Ascending aorta (tissue), 2 donors: ENCODE measurements at regions of chr10 and their contacts with region 1.

Region 1: GRCh38 chr10:6401562-6402348 is 178.3 kb downstream of the PRKCQ start:
- DNase-seq: peak; percentile 32 to 88
- H3K4me3 ChIP-seq: peak overlapping the region; percentile 35 to 55
- H3K27ac ChIP-seq: peak overlapping the region; percentile 48 to 71
- H3K4me1 ChIP-seq: peaks cover 0 to 13% of the 10 kb centered on the region in 2 donors
- H3K27me3 ChIP-seq: no peaks in the 10 kb centered on the region
- CTCF ChIP-seq: peak; percentile 68 to 82 (median 77)

Region 2: DNA sequence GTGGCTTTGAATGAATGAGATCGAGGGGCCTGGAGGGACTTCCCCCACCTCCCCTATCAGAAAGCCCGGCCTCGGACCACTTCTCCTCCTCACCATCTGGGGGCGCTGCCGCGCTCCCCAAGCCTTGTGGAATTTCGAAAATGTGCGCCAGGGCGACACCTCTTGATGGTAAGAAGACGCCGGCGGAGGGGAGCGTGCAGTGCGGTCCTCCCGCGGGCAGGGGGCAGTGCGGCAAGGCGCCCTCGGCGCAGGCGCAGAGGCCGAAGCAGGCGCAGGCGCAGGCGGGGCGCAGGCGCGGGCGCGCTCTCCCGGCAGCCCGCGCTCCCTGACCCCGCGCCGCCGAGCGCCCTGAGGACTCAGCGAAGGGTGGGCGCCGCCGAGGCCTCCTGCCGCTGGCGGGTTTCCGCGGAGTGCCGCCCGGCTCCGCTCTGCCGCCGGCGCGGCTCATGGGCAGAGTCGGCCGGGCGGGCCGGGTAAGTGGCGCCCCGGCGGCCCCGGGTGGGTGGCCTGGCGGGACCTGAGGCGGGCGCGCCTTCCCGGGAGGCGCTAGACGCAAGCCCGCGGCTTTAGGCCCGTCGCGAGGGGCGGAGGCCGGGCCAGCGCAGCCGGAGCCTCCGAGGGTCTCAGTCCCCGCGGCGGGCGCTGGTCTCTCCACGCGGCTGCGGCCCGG is 312.9 kb before region 1 on chr10 and contains the start of gene RBM17:
- intact Hi-C with region 1: loop called (anchors 1 kb)
- DNase-seq: peak; percentile 86 to 99
- H3K4me3 ChIP-seq: peak within 1 kb of the TSS; percentile 71 to 96
- H3K27ac ChIP-seq: peak within 1 kb of the TSS; percentile 71 to 84
- H3K4me1 ChIP-seq: peaks cover 4 to 27% of the 10 kb centered on the region in 2 donors
- H3K27me3 ChIP-seq: no peaks in the 10 kb centered on the region
- CTCF ChIP-seq: peak; percentile 99 to 100 (median 100)
- total RNA-seq, gene RBM17: 22.7 TPM

Region 3: DNA sequence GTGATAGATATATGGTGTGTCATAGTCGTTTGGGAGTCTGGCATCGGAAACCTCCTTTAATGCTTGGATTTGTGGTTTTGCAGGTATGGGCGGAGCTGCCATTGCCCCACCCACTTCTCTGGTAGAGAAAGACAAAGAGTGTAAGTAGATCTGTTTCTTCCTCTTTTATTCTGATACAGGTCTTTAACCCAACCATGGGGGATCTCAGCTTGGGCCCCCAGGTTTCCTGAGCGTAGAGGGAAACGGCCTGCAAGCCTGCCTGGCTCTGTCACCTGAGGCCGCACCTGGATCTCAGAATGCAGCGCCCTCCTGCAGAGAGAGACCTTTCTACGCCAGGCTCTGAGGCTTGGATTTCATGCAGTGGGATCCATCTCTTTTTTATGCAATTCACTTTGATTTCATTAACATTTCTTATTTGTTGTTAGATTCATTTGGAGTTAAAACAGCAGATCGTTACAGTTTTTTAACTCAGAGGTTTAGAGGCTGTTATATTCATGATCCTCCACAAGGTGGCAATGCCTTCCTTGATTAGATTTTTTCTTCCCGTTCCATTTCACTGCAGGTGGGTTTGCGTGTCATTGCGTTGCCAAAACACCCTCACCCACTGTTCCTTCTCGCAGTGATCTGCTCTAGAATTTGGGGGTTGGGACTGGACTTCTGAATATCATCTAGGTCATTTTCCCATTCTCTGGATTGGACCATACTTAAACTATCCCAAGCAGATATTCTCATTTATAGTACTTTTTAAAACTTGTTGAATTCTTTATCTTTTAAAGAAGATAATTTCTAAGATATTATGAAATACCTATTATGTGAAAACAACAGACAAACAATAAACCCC is 292.9 kb before region 1 on chr10:
- intact Hi-C with region 1: loop called (anchors 1 kb)
- DNase-seq: no peak
- H3K4me3 ChIP-seq: no peak overlapping the region
- H3K27ac ChIP-seq: no peak overlapping the region
- H3K4me1 ChIP-seq: peaks cover 0 to 2% of the 10 kb centered on the region in 2 donors
- H3K27me3 ChIP-seq: no peaks in the 10 kb centered on the region
- CTCF ChIP-seq: peak; percentile 69 to 84 (median 82)

Region 4: GRCh38 chr10:6151087-6151977 is 250.4 kb before region 1 on chr10:
- intact Hi-C with region 1: loop called (anchors 5 kb)
- DNase-seq: peak in 1 of 2 donors; percentile 84
- H3K4me3 ChIP-seq: peak overlapping the region in 1 of 2 donors; percentile 43
- H3K27ac ChIP-seq: peak overlapping the region; percentile 59 to 72
- H3K4me1 ChIP-seq: peaks cover 0 to 8% of the 10 kb centered on the region in 2 donors
- H3K27me3 ChIP-seq: no peaks in the 10 kb centered on the region
- CTCF ChIP-seq: peak; percentile 61 to 73 (median 70)

Region 5: GRCh38 chr10:6221971-6222751 is 179.6 kb before region 1 on chr10:
- intact Hi-C with region 1: loop called (anchors 5 kb)
- DNase-seq: peak in 1 of 2 donors; percentile 90
- H3K4me3 ChIP-seq: peak overlapping the region in 1 of 2 donors; percentile 7
- H3K27ac ChIP-seq: peak overlapping the region; percentile 87 to 93
- H3K4me1 ChIP-seq: peaks cover 10 to 22% of the 10 kb centered on the region in 2 donors
- H3K27me3 ChIP-seq: no peaks in the 10 kb centered on the region
- CTCF ChIP-seq: no peak

Region 6: DNA sequence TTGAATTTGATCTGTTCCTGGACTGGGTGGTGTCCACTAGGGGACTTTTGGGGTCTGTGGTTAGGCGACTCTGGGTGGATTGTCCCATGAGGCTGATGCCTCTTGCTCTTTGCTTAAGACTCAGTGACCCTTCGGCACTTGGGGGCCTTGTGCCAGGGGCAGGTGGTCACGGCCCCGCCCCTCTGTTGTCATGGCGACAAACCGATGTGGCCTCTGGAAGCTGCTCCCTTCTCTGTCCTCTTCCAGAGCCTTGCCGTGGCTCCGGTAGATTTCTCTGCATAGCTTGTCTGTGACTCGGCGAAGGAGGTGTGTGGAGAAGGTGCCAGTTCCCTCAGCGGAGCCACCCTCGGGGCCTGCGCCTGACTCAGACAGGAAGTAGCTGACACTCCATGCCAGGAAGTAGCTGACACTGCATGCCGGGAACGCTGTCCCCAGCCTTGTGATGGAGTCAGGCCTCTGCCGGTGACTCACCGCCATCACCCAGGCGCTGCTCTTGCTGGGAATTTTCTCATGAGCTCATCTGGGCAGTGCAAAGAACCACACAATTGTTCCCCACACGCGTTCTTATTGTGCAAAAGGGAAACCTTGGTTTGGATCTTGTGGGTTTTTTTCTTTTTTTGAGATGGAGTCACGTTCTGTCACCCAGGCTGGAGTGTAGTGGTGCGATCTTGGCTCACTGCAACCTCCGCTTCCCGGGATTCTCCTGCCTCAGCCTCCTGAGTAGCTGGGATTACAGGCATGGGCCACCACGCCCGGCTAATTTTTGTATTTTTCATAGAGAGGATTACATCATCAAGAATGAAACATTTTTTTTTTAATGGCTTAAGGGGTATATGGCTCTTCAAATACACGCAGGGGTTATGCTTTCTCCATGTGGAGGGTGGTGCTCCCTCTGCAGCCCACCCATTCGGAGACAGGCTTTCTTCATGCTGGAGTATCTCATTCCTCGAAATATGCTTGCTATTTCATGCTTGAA is 126.4 kb before region 1 on chr10:
- intact Hi-C with region 1: loop called (anchors 5 kb)
- DNase-seq: peak; percentile 99
- H3K4me3 ChIP-seq: peak overlapping the region; percentile 23 to 32
- H3K27ac ChIP-seq: peak overlapping the region; percentile 95 to 97
- H3K4me1 ChIP-seq: peaks cover 10 to 47% of the 10 kb centered on the region in 2 donors
- H3K27me3 ChIP-seq: no peaks in the 10 kb centered on the region
- CTCF ChIP-seq: no peak

Region 7: GRCh38 chr10:6542999-6543430 is 141.3 kb after region 1 on chr10:
- intact Hi-C with region 1: no loop called
- DNase-seq: no peak
- H3K4me3 ChIP-seq: no peak overlapping the region
- H3K27ac ChIP-seq: no peak overlapping the region
- H3K4me1 ChIP-seq: no peaks in the 10 kb centered on the region
- H3K27me3 ChIP-seq: no peaks in the 10 kb centered on the region
- CTCF ChIP-seq: no peak